Activated CD4-positive, alpha-beta T cell treated with anti-CD3 and anti-CD28 coated beads for 36 hours (primary cell): ENCODE measurements at regions of chr19 and their contacts with region 1.

Region 1: DNA sequence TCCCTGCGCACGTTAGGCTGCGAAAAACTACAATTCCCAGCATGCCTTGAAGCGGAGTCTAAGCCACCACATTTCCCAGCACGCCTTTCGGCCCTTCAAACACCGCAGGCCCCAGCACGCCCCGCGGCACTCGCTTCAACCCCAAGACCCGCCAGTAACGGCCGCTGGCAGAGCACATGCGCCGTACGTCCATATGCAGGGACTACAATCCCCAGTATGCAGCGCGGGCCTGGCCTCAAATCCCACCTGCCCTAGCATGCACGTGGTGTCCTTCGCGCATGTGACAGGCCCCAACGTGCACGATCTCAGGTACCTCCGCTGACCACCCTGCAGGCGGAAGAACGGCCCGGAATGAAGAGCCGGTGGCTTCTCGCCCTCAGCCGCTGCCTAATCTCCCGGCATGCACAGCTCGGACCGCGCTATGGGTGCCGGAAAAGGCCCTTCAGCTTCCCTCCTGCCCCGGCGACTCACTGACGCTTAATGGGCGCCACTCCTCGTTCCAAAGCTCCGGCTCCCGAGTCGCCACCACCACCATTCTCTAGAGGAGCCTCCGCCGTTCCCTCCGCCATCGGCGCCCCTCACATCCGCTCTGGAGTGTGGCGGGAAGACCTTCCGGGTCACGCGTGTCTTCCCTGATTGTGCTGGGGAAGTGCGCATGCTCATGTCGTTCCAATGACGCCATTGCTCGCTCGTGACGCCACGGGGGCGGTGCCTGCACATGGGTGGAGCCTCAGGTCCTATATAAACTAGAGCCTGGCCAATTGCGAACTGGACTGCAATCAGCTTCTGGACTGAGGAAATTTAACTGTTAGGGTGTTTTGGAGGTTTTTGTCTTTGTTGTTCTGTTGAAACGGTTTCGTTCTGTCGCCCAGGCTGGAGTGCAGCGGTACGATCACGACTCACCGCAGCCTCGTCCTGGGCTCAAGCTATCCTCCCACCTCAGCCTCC is at the start of gene DUS3L:
- DNase-seq: peak; percentile 98
- ATAC-seq: peak; percentile 97
- H3K4me3 Mint-ChIP-seq: peak within 1 kb of the TSS; percentile 98
- H3K27ac Mint-ChIP-seq: peak within 1 kb of the TSS; percentile 100
- H3K4me1 Mint-ChIP-seq: peaks cover 13% of the 10 kb centered on the region
- H3K27me3 Mint-ChIP-seq: no peaks in the 10 kb centered on the region
- total RNA-seq, gene DUS3L: 59.4 to 63.9 TPM

Region 2: GRCh38 chr19:5622463-5623396 is 168.1 kb before region 1 on chr19 and contains the starts of genes SAFB and SAFB2:
- CTCF ChIA-PET with region 1: no interaction called
- POLR2A ChIA-PET with region 1: no interaction called
- intact Hi-C with region 1: loop called in 1 of 2 experiments (anchors 1 kb)
- DNase-seq: peak; percentile 100
- ATAC-seq: peak; percentile 92
- H3K4me3 Mint-ChIP-seq: peak within 1 kb of the TSS; percentile 100
- H3K27ac Mint-ChIP-seq: peak within 1 kb of the TSS; percentile 100
- H3K4me1 Mint-ChIP-seq: peaks cover 66% of the 10 kb centered on the region
- H3K27me3 Mint-ChIP-seq: no peaks in the 10 kb centered on the region
- total RNA-seq, gene SAFB: 100 to 118 TPM
- total RNA-seq, gene SAFB2: 65.0 to 78.6 TPM

Region 3: DNA sequence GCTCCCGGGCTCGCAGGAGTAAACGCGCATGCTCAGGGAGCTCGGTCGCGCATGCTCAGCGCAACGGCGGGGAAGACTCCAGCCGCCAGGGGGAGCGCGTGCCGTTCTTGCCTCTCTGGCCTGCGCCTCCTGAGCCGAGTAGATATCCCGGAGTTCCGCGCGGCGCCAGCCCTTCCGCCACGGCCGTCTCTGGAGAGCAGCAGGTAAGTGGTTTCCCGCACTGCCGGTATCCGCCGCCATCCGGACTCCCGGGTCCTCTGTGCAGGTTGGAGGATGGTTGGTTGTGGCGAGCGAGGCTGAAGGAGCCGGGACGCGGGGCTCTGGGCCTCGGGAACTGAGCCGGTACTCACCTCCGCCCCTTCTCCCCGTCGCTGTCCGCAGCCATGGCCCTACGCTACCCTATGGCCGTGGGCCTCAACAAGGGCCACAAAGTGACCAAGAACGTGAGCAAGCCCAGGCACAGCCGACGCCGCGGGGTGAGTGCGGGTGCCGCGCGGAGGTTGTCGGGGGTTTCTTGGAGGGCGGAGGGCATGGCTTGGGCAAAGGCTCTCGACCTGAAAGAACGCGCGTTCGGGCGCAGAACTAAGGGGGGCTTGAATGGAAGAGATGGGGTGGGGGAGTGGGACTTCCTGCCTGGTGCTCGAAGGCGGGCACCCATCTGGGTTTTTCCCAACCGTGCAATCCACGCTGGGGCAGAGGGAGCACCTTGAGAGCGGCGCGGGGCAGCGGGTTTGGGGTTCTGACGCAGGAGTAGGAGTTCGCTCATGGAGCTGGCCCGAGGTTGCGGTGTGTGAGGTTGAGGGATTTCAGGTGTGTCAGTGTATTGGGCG is 100.5 kb before region 1 on chr19 and contains the start of gene RPL36:
- CTCF ChIA-PET with region 1: interaction called, 15 read pairs
- POLR2A ChIA-PET with region 1: interaction called, 3 read pairs
- intact Hi-C with region 1: loop called (anchors 1 to 2 kb)
- DNase-seq: peak; percentile 100
- ATAC-seq: peak; percentile 54
- H3K4me3 Mint-ChIP-seq: peak within 1 kb of the TSS; percentile 100
- H3K27ac Mint-ChIP-seq: peak within 1 kb of the TSS; percentile 96
- H3K4me1 Mint-ChIP-seq: peaks cover 21% of the 10 kb centered on the region
- H3K27me3 Mint-ChIP-seq: no peaks in the 10 kb centered on the region
- total RNA-seq, gene RPL36: 1,452 to 1,530 TPM

Region 4: DNA sequence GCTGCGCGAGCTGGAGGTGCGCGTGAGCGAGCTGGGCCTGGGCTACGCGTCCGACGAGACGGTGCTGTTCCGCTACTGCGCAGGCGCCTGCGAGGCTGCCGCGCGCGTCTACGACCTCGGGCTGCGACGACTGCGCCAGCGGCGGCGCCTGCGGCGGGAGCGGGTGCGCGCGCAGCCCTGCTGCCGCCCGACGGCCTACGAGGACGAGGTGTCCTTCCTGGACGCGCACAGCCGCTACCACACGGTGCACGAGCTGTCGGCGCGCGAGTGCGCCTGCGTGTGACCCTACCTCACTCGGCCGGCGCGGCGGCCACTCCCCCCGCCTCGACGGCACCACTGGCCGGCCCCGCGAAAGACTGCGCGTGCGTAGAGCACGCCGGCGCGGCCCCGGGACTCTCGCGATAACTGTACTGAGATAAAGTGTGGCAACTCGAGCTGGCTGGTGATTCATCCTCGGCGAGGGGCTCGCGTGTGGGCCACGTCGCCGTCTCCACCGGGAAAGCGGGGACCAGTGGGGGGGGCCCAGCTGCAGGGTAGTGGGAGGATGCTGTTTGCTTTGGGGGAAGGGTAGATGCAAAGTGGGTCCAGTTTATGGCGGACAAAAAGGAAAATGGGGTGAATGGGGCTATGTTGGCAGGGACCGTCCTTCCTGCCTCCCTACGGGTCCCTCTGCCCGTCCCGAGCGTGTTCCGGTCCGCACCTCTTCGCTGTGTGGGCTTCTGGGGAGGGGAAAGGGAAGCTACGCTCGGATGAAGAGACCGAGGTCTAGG is 37.2 kb after region 1 on chr19:
- CTCF ChIA-PET with region 1: interaction called, 8 read pairs
- POLR2A ChIA-PET with region 1: interaction called, 6 read pairs
- intact Hi-C with region 1: loop called (anchors 1 kb)
- DNase-seq: peak; percentile 98
- ATAC-seq: peak; percentile 84
- H3K4me3 Mint-ChIP-seq: peak overlapping the region; percentile 92
- H3K27ac Mint-ChIP-seq: peak overlapping the region; percentile 96
- H3K4me1 Mint-ChIP-seq: peaks cover 4% of the 10 kb centered on the region
- H3K27me3 Mint-ChIP-seq: no peaks in the 10 kb centered on the region

Region 5: DNA sequence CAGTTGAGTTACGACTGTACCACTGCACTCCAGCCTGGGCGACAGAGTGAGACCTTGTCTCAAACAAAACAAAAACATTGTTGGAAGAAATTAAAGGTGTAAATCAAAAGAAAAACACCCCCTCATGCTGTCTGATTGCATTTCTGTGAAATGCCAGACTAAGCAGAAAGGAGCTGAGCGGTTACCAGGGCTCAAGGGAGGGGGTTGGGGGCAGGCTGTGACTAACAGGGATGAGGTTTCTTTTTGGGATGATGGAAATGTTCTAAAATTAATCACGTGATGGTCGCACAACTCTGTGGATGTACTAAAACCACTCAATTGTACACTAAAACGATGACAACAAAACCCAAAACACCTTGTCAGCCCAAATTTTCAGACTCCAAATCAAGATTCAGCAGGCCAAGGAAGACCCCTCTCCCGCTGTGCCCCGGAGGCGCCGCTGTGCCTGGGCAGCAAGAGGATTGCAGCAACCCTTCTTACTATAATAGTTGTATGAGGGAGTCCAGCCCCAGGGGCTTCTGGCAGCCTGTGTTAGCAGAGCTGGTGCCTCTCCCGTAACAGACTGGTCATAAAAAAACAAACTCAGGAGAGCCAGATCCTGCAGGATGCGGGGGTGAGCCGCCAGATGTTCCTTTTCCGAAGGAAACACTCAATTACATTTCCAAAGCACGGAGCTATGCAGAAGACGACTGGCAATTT is 144.1 kb after region 1 on chr19:
- CTCF ChIA-PET with region 1: no interaction called
- POLR2A ChIA-PET with region 1: no interaction called
- intact Hi-C with region 1: no loop called
- DNase-seq: no peak
- ATAC-seq: no peak
- H3K4me3 Mint-ChIP-seq: no peak overlapping the region
- H3K27ac Mint-ChIP-seq: no peak overlapping the region
- H3K4me1 Mint-ChIP-seq: no peaks in the 10 kb centered on the region
- H3K27me3 Mint-ChIP-seq: no peaks in the 10 kb centered on the region

Region 6: GRCh38 chr19:6199240-6199983 is 408.6 kb after region 1 on chr19:
- CTCF ChIA-PET with region 1: no interaction called
- POLR2A ChIA-PET with region 1: no interaction called
- intact Hi-C with region 1: loop called in 1 of 2 experiments (anchors 1 kb)
- DNase-seq: peak; percentile 100
- ATAC-seq: peak; percentile 95
- H3K4me3 Mint-ChIP-seq: peak overlapping the region; percentile 100
- H3K27ac Mint-ChIP-seq: peak overlapping the region; percentile 92
- H3K4me1 Mint-ChIP-seq: peaks cover 12% of the 10 kb centered on the region
- H3K27me3 Mint-ChIP-seq: no peaks in the 10 kb centered on the region

Region 7: GRCh38 chr19:6362027-6362350 is 571.1 kb after region 1 on chr19:
- CTCF ChIA-PET with region 1: no interaction called
- POLR2A ChIA-PET with region 1: no interaction called
- intact Hi-C with region 1: loop called in 1 of 2 experiments (anchors 1 kb)
- DNase-seq: no peak
- ATAC-seq: peak; percentile 1
- H3K4me3 Mint-ChIP-seq: peak overlapping the region; percentile 85
- H3K27ac Mint-ChIP-seq: peak overlapping the region; percentile 91
- H3K4me1 Mint-ChIP-seq: peaks cover 16% of the 10 kb centered on the region
- H3K27me3 Mint-ChIP-seq: no peaks in the 10 kb centered on the region